ENCODE measurements at regions of chr12 and their contacts with region 1.

Region 1: DNA sequence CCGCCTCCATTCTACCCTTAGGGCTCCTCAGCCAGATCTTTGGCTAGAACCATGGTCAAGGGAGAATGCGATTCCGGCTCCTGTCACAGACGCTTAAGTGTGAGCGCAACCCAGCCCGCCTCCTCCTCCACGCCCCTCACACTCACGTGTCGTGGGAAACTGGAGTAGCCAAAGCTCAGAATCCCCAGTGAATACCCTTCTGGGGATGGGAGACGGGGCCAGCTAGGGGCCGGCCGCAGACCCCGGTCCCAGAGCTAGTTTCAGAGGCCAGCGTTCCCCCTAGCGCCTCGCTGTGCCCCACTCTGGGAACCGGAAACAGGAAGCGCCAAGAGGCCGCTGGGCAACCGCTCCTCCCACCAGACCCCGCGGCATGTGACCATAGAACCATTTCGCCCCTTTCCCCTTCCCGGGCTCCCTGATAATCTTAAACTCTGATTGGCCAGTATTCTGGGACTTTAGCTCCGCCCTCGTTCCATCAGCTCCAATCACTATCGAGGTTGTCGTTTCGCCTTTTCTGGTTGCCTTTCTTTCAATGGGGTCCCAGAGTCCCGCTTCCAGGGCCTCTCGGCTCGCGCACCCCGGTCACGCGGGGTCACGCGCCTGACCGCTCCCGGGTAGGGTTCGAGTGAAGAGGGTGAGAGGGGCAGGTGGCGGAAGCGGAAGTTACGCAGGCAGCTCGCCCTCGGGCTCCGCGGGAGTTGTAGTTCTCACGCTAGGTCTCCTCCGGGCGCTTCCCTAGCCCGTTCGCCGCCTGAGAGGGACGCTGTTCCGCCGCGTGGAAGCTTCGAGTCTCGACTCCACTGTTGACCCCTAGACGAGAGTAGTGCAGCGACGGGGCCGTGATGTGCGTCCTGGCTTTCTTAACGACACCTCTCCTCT is at the start of gene M6PR:
- DNase-seq: peak; percentile 87 to 95 (median 89)
- ATAC-seq: peak; percentile 93 to 97 (median 95)
- H3K4me3 ChIP-seq: peak within 1 kb of the TSS; percentile 71 to 89 (median 82)
- H3K27ac ChIP-seq: peak within 1 kb of the TSS; percentile 85 to 98 (median 94)
- H3K4me1 ChIP-seq: peaks cover 0 to 23% (median 9%) of the 10 kb centered on the region in 3 donors
- H3K27me3 ChIP-seq: no peaks in the 10 kb centered on the region
- CTCF ChIP-seq: peak in 1 of 4 donors; percentile 10
- total RNA-seq, gene M6PR: 38.2 to 99.7 (median 64.0) TPM

Region 2: DNA sequence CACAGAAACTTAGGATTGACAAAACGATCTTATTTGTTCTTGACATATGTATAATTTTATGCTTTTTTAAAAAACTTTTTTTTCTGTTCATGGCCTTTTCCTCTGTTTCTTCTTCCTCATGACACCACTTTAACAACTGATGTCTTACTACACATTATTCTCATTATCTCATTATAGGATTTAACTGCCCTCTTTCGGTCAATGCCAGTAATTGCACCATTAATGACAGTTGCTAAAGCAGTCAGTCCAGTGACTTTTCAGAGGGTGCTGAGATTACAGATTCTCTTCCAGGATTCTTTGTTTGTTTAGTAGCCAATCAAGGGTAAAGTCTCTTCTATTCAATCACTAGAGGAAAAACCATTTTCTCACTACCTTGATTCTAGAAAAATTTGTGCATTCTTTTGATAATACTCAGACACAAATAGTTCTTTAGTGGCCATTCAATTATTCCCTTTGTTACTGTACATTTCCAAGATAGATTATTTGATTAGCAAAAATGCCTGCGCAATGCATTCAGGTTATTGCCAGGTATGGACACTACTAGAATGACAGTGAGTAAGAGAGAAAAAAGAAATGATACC is 89.9 kb after region 1 on chr12:
- intact Hi-C with region 1: loop called in 1 of 3 experiments (anchors 10 kb)
- DNase-seq: peak in 1 of 6 donors; percentile 13
- ATAC-seq: peak; percentile 55 to 87 (median 83)
- H3K4me3 ChIP-seq: no peak overlapping the region
- H3K27ac ChIP-seq: no peak overlapping the region
- H3K4me1 ChIP-seq: peaks cover 0 to 7% (median 0%) of the 10 kb centered on the region in 3 donors
- H3K27me3 ChIP-seq: no peaks in the 10 kb centered on the region
- CTCF ChIP-seq: peak; percentile 45 to 75 (median 63)

Measured in pancreas (tissue), 10 donors.